WTC11 (cell line): ENCODE measurements at regions of chr3 and their contacts with region 1.

Region 1: GRCh38 chr3:123382846-123383746 is 65.8 kb downstream of the ADCY5 start:
- DNase-seq: peak; percentile 28
- ATAC-seq: peak; percentile 80
- H3K4me3 Mint-ChIP-seq: no peak overlapping the region
- H3K27ac Mint-ChIP-seq: no peak overlapping the region; the same call in 1 of the 2 replicates
- H3K4me1 Mint-ChIP-seq: peaks cover 34% of the 10 kb centered on the region
- H3K27me3 Mint-ChIP-seq: no peaks in the 10 kb centered on the region
- CTCF ChIP-seq: no peak

Region 2: DNA sequence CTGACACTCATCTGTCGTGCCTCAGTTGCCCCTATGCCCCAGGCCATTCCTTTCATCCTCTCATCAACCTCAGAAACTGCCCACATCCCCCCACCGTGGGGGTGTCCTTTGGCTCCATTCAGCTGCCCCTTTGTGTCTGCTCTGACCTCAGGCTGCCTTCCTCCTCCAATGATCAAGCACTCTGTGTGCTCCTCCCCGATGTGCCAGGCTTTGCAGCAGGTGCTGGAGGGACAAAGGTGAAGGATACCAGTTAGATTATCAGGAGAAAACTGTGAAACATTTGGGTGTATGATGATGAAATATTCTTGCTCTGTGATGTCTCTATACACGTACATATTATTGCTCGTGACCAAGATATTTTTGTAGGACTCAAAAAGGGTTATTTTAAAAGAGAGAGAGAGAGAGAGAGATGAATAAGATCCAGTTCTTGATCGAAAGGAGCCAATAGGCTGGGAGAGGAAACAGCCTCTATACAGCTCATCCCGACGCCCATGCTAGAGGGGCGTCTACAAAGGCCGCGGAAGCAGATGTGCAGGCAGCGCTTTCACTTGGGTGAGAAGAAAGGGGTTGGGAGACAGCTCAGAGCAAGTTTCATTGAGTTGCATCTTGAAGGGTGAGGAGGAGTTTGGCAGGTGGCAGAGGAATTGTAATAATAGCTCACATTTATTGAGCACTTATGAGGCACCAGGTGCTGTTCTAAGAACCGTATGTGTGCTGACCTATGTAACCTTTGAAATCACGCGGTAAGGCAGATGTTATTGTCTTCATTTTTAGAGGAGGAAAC is 94.1 kb after region 1 on chr3:
- CTCF ChIA-PET with region 1: no interaction called
- POLR2A ChIA-PET with region 1: interaction called, 10 read pairs
- DNase-seq: no peak
- ATAC-seq: no peak
- H3K4me3 Mint-ChIP-seq: no peak overlapping the region
- H3K27ac Mint-ChIP-seq: no peak overlapping the region
- H3K4me1 Mint-ChIP-seq: 0 out of 2 replicates have a peak, but pooled peaks cover 3% of the 10 kb centered on the region
- H3K27me3 Mint-ChIP-seq: no peaks in the 10 kb centered on the region; the same call in 1 of the 2 replicates
- CTCF ChIP-seq: no peak